ENCODE measurements at regions of chr1 and their contacts with region 1.

Region 1: GRCh38 chr1:216464489-216464888 is 41.2 kb upstream of the USH2A start:
- DNase-seq: no peak
- H3K4me3 ChIP-seq: no peak overlapping the region
- H3K4me3 Mint-ChIP-seq: no peak overlapping the region
- H3K27ac Mint-ChIP-seq: no peak overlapping the region
- H3K4me1 ChIP-seq: peaks cover 71% of the 10 kb centered on the region
- H3K4me1 Mint-ChIP-seq: peaks cover 47% of the 10 kb centered on the region
- H3K27me3 ChIP-seq: no peaks in the 10 kb centered on the region
- H3K27me3 Mint-ChIP-seq: no peaks in the 10 kb centered on the region
- CTCF ChIP-seq: no peak

Region 2: DNA sequence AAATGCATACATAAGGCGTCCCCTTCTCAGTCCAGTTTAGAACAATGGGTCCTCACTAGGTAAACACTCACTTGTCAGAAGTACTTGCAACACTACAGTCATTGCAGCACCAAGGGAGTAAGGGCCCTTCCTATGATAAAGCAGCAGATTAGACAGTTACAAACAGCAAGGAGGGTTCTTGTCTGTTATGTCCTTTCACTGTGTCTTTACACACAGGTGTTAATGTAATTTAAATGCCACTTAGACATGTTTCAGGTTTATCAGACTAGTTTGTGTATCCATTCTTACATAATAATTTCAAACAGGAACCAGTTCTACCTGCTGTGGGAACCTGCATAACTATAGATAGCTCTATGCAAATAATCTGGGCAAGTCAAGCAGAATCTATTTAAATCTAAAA is 64.3 kb after region 1 on chr1:
- CTCF ChIA-PET with region 1: no interaction called
- POLR2A ChIA-PET with region 1: interaction called, 4 read pairs
- intact Hi-C with region 1: loop called (anchors 2 kb)
- DNase-seq: peak; percentile 66 to 68
- H3K4me3 ChIP-seq: no peak overlapping the region
- H3K4me3 Mint-ChIP-seq: peak overlapping the region; percentile 44
- H3K27ac Mint-ChIP-seq: no peak overlapping the region
- H3K4me1 ChIP-seq: peaks cover 24% of the 10 kb centered on the region
- H3K4me1 Mint-ChIP-seq: peaks cover 18% of the 10 kb centered on the region
- H3K27me3 ChIP-seq: no peaks in the 10 kb centered on the region
- H3K27me3 Mint-ChIP-seq: no peaks in the 10 kb centered on the region
- CTCF ChIP-seq: no peak

Region 3: DNA sequence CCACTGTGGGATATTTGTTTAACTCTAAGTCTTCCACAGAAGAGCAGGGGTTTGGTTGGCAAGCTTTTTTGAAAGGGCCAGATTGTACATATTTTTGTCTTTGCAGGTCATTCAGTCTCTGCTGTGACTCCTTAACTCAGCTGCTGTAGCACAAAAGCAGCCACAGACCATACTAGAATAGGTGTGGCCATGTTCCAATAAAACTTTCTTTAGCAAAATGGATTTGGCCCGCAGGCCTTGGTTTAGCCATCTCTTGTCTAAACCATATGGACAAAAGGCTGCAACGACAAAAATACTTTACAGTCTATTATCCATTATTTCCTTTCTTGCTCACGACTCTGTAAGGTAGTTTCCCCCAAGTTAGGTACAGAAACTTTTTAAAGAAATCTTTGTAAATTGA is 198.2 kb after region 1 on chr1:
- CTCF ChIA-PET with region 1: no interaction called
- POLR2A ChIA-PET with region 1: no interaction called
- intact Hi-C with region 1: loop called (anchors 1 kb)
- DNase-seq: no peak
- H3K4me3 ChIP-seq: no peak overlapping the region
- H3K4me3 Mint-ChIP-seq: peak overlapping the region; percentile 3
- H3K27ac Mint-ChIP-seq: peak overlapping the region; percentile 16
- H3K4me1 ChIP-seq: peaks cover 53% of the 10 kb centered on the region
- H3K4me1 Mint-ChIP-seq: peaks cover 44% of the 10 kb centered on the region
- H3K27me3 ChIP-seq: no peaks in the 10 kb centered on the region
- H3K27me3 Mint-ChIP-seq: no peaks in the 10 kb centered on the region
- CTCF ChIP-seq: no peak